ENCODE measurements at regions of chr12 and their contacts with region 1.

Region 1: GRCh38 chr12:49580572-49581535 is 12.9 kb upstream of the MCRS1 start:
- DNase-seq: peak; percentile 83
- H3K4me3 ChIP-seq: no peak overlapping the region; a peak in 1 of 4 replicates
- H3K27ac ChIP-seq: no peak overlapping the region; a peak in 1 of 4 replicates
- H3K4me1 ChIP-seq: peaks cover 0 to 18% of the 10 kb centered on the region in 2 experiments; a peak in 1 of 4 replicates
- H3K27me3 ChIP-seq: no peaks in the 10 kb centered on the region
- CTCF ChIP-seq: peak; percentile 88
- EP300 ChIP-seq: no peak; a peak in 1 of 4 replicates
- RAD21 ChIP-seq: peak; percentile 82

Region 2: DNA sequence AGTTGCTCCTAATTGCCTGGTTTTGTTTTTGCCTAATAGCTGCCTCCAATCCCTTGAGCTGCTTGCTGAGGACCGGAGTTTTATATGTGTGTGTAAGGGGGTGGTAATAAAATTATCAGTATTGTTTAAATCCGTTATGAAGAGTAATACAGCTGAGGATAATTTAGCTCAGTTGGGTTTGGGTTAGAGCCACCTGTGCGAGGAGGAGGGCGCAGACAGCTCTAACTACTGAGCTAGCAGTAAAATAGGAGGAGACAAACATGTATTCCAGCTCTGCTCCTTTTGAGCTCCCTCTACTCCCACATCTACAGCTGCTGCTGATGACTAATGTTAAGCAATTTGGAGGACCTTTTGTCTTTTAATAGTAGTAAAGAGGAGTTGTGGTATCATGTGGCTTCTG is 152.1 kb before region 1 on chr12:
- CTCF ChIA-PET with region 1: no interaction called
- POLR2A ChIA-PET with region 1: no interaction called
- DNase-seq: no peak
- H3K4me3 ChIP-seq: no peak overlapping the region
- H3K27ac ChIP-seq: peak overlapping the region in 1 of 2 experiments; percentile 27; a peak in 2 of 4 replicates
- H3K4me1 ChIP-seq: peaks cover 0 to 14% of the 10 kb centered on the region in 2 experiments; a peak in 1 of 4 replicates
- H3K27me3 ChIP-seq: no peaks in the 10 kb centered on the region
- CTCF ChIP-seq: no peak
- EP300 ChIP-seq: no peak
- RAD21 ChIP-seq: no peak

Region 3: GRCh38 chr12:49567611-49568441 is 13.0 kb before region 1 on chr12 and contains the start of gene MCRS1:
- CTCF ChIA-PET with region 1: interaction called, 32 read pairs
- POLR2A ChIA-PET with region 1: interaction called, 4 read pairs
- DNase-seq: peak; percentile 96
- H3K4me3 ChIP-seq: peak within 1 kb of the TSS; percentile 90 to 99
- H3K27ac ChIP-seq: peak within 1 kb of the TSS; percentile 85 to 95
- H3K4me1 ChIP-seq: peaks cover 7 to 14% of the 10 kb centered on the region in 2 experiments; a peak in 3 of 4 replicates
- H3K27me3 ChIP-seq: no peaks in the 10 kb centered on the region
- CTCF ChIP-seq: no peak
- EP300 ChIP-seq: no peak
- RAD21 ChIP-seq: no peak
- polyA plus RNA-seq, gene MCRS1: 103 and 107 TPM in 2 replicates

Region 4: GRCh38 chr12:49603721-49604120 is 22.9 kb after region 1 on chr12:
- CTCF ChIA-PET with region 1: interaction called, 10 read pairs
- POLR2A ChIA-PET with region 1: interaction called, 5 read pairs
- DNase-seq: no peak
- H3K4me3 ChIP-seq: no peak overlapping the region
- H3K27ac ChIP-seq: no peak overlapping the region
- H3K4me1 ChIP-seq: peaks cover 0 to 2% of the 10 kb centered on the region in 2 experiments; a peak in 1 of 4 replicates
- H3K27me3 ChIP-seq: no peaks in the 10 kb centered on the region
- CTCF ChIP-seq: no peak
- EP300 ChIP-seq: no peak
- RAD21 ChIP-seq: no peak

Region 5: GRCh38 chr12:49623142-49623904 is 42.5 kb after region 1 on chr12 and contains the start of gene PRPF40B:
- CTCF ChIA-PET with region 1: interaction called, 27 read pairs
- POLR2A ChIA-PET with region 1: no interaction called
- DNase-seq: peak; percentile 99
- H3K4me3 ChIP-seq: peak within 1 kb of the TSS; percentile 63 to 67
- H3K27ac ChIP-seq: peak within 1 kb of the TSS; percentile 79 to 86
- H3K4me1 ChIP-seq: peaks cover 14 to 43% of the 10 kb centered on the region in 2 experiments; a peak in 3 of 4 replicates
- H3K27me3 ChIP-seq: no peaks in the 10 kb centered on the region
- CTCF ChIP-seq: peak; percentile 42
- EP300 ChIP-seq: 0 out of 4 replicates have a peak, but pooled peaks of 1 of the 2 experiments have one; percentile 33
- RAD21 ChIP-seq: peak; percentile 18; the same call in 1 of the 2 replicates
- polyA plus RNA-seq, gene PRPF40B: 24.3 and 27.0 TPM in 2 replicates

Measured in SK-N-SH (cell line).